ENCODE measurements at regions of chr22 and their contacts with region 1.

Region 1: DNA sequence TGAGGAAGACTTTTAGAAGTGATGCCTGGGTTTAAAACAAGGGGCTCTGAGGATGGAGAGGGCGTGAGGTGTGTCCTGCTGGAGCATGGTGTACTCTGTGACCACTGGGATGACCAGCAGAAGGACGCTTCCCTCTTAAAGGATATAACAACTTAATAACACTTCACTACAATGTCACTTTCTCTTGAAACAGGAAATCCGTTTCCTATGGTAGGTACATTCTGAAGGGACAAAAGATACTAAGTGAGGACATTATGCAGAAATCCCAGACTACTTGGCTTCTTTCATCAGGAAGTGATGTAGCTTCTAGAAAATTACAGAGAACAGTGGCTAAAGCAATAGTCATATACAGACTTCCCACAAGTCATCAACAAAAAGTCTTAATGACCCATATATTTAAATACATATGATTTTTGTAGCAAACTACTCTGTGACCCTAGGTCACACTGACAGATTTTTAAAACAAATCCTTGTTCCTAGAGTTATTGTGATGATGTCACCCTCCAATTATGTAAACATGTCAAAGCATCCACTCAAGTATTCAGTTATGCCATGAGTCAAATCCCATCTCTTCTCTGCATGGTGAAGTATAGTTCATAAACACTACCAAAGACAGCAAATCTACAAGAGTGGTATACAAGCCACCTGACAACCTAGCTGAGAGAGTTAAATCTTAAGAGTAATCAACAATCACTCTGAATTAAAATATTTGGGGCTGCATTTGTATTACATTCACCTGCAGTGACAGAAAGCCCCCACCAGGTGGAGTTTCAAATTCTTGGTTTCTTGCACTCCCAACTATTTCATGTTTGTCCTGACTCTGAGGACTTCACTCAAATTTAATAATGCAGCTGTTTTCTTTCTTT is 32.8 kb downstream of the PITPNB start:
- DNase-seq: no peak
- ATAC-seq: peak; percentile 69

Region 2: DNA sequence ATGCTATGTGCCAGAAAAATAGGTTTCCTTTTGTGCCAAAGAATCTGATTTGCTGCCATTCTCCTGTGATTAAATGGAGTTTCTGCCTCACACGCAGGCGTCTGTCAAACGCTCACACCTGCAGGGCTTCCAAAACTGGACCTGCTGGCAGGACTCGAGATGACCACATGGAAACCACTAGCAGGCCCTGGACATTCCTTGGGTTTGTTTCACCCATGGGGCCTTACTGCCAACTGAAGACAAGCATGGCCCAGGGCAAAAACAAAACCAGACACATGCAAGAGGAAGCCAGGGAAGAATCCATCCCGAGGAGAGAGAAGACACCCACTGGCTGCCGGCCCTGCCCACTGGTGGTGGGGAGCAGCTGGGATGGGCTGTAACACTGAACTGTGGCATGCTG is 28.8 kb before region 1 on chr22:
- intact Hi-C with region 1: no loop called
- DNase-seq: no peak
- ATAC-seq: peak; percentile 23

Region 3: DNA sequence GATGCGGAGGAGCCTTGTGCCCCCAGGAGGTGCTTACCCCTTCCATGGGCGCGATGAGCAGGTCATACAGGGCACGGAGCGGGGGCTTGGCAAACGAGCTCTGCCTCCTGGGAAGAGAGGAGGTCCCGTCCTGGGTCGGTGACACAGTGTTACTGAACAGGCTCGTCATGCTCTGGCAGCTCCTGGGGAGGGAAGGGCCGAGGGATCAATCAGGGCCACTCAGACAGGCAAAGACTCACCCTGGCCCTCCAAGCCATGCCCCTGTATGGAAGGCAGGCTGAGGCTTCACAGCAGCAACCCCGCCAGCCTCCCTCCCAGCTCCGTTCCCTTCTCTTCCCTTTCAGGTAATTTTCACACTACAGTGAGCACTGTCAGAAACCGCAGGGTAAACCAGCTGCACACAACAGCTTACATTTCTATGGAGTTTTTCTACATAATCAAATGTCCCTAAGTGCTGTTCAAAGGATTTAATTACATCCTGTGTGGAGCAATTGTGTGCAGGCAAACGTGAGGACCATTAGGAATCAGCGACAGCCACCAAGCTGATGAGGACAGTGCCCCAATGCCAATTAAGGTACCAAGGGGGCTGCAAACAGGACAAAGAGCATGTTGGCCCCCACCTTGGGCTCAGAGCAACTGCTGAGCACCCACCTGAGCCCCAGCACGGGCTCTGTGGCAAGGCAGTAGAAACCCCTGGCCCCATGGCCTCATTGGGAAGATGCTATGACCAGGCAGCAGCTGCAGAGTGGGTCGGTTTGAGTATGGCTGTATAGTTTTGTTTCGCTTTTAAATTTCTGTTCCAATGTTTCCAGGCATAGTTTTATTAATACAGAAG is 128.2 kb after region 1 on chr22:
- intact Hi-C with region 1: loop called (anchors 5 kb)
- DNase-seq: peak; percentile 27
- ATAC-seq: no peak

Region 4: DNA sequence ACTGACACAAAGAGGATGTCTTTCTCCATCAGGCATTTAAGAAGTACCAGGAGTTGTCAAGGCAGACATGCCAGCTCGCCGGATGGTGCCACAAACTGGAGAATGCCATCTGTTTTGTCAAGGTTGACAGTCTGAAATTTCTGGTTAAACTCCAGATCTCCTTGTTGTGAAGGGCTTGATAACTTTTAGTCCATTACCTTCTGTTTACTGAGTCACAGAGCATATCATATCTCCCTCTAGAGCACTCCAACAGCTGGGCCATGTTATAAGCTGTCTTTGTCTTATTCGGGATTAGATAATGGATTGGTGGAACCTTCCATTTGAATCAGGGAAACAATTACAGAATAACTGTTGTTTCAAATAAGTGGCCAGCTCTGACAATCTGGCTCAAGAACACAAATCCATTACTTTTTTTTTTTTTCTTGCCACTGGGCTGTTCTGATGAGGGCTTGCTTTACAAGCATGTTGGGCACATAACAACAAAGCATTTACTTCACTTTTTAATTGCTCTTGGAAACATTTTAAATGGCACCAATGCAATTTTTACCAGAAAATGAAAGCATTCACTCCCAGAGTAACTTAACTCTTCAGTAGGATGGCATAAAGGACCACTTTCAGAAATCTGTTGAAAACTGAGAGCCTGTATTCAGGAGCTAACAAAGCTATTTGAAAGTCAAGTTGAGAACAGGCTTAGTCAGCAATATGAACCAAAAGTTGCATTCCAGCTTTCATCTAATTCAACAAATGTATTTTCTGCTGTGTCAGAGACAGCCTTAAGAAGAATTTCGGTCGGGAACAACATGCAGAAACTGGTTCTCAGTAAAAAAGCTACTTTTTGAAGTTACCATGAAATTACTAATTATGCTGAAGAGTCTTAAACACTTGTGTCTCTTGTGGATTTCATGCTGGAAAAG is 260.4 kb after region 1 on chr22:
- intact Hi-C with region 1: no loop called
- DNase-seq: no peak
- ATAC-seq: no peak

Region 5: DNA sequence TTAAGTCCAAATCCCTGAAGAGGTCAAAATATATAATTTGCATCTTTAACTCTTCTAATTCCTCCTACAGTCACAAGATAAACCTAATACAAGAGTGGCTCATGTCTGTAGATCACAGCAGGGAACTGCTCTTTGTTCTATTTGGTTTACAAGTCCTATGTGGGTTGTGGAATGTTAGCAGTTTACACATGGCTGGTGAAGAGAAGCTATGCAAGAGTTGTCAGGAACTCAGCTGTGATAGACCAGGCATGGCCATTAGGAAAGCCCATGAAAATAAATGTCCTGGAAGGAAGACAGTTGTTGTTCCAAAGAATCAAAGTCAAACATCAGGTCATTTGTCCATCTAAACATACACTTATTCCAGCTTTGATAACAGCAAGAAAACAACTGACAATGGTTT is 345.2 kb after region 1 on chr22:
- intact Hi-C with region 1: no loop called
- DNase-seq: no peak
- ATAC-seq: peak; percentile 78

Measured in sciatic nerve (tissue), 2 donors.